ENCODE measurements at regions of chr5 and their contacts with region 1.

Region 1: DNA sequence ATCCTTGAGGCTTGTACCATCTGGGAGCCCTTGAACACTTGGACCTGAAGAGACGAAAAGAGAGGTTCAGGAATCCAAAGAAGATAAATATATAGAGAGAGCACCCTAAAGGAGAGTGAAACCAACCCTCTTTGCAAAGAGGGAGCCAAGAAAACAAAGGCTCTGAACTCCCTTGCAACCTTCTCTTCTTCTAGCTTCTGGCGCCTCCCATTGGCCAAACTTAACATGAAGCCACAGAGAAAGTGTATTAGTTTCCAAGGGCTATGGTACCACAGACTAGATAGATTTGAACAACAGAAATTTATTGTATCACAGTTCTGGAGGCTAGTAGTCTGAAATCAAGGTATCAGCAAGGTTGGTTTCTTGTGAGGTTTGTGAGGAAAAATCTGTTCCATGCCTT is 175.1 kb downstream of the HCN1 start:
- DNase-seq: peak; percentile 61 to 78 (median 66)
- ATAC-seq: peak; percentile 59
- H3K4me3 ChIP-seq: no peak overlapping the region
- H3K27ac ChIP-seq: no peak overlapping the region
- H3K4me1 ChIP-seq: no peaks in the 10 kb centered on the region
- H3K27me3 ChIP-seq: no peaks in the 10 kb centered on the region
- CTCF ChIP-seq: peak; percentile 24 to 73 (median 57)
- POLR2A ChIP-seq: no peak

Region 2: GRCh38 chr5:45038366-45038987 is 482.6 kb before region 1 on chr5:
- intact Hi-C with region 1: loop called (anchors 5 kb)
- DNase-seq: peak in 1 of 4 donors; percentile 18
- ATAC-seq: peak; percentile 67
- H3K4me3 ChIP-seq: no peak overlapping the region
- H3K27ac ChIP-seq: no peak overlapping the region
- H3K4me1 ChIP-seq: no peaks in the 10 kb centered on the region
- H3K27me3 ChIP-seq: no peaks in the 10 kb centered on the region
- CTCF ChIP-seq: peak in 6 of 7 experiments; percentile 56 to 69 (median 66)
- POLR2A ChIP-seq: no peak

Region 3: GRCh38 chr5:45826055-45826454 is 305.0 kb after region 1 on chr5:
- intact Hi-C with region 1: no loop called
- DNase-seq: no peak
- ATAC-seq: no peak
- H3K4me3 ChIP-seq: no peak overlapping the region
- H3K27ac ChIP-seq: no peak overlapping the region
- H3K4me1 ChIP-seq: no peaks in the 10 kb centered on the region
- H3K27me3 ChIP-seq: no peaks in the 10 kb centered on the region
- CTCF ChIP-seq: no peak
- POLR2A ChIP-seq: no peak

Measured in body of pancreas (tissue), 4 donors.